Ascending aorta (tissue), 2 donors: ENCODE measurements at regions of chr1 and their contacts with region 1.

Region 1: GRCh38 chr1:173476664-173477285 is 360 bp upstream of the PRDX6 start:
- DNase-seq: peak; percentile 64 to 93
- H3K4me3 ChIP-seq: peak overlapping the region; percentile 88 to 95
- H3K27ac ChIP-seq: peak overlapping the region; percentile 99
- H3K4me1 ChIP-seq: peaks cover 12 to 37% of the 10 kb centered on the region in 2 donors
- H3K27me3 ChIP-seq: no peaks in the 10 kb centered on the region
- CTCF ChIP-seq: peak in 1 of 3 experiments; percentile 5

Region 2: DNA sequence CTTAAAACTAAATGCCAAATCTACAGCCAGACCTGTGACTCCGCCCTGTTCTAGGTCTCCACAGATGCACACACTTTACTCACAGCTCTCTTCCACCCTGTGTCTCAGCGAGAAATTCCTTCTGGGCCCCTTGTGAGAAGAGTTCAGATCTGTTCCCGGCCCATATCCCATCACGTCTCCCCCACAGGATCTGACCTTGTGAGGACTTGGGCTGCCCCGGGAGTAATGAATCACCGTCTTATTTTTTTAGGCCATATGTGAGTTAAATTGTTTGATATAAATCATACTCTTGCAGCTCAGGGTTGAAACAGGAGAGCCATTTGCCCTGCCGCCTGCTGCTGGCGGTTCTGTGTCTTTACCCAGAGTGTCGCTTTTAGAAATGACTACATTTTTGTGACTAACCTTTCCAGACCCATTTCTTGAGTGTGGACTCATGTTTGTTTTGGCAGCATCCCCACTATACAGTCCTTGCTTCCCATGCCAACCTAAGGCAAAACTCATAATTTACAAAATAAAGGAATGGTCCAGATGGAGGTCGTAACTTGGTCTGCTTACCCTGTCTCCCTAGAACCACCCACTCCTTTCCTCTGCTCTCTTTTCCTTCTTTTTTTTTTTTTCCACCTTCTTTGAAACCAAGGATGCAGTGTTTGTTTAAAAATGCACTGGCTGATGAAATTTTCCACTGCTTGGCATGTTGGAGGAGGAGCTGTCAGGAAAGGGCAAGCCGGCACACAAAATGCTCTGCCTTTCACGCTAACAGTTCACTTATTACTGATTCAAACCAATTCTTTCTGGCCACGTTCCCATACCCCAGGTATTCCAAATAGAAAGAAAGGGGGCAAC is 1154.3 kb before region 1 on chr1:
- intact Hi-C with region 1: loop called (anchors 10 kb)
- DNase-seq: peak; percentile 35 to 87
- H3K4me3 ChIP-seq: peak overlapping the region; percentile 5 to 52
- H3K27ac ChIP-seq: peak overlapping the region; percentile 91 to 92
- H3K4me1 ChIP-seq: peaks cover 0 to 23% of the 10 kb centered on the region in 2 donors
- H3K27me3 ChIP-seq: no peaks in the 10 kb centered on the region
- CTCF ChIP-seq: peak in 1 of 3 experiments; percentile 15

Region 3: GRCh38 chr1:173453982-173454381 is 22.8 kb before region 1 on chr1:
- intact Hi-C with region 1: no loop called
- DNase-seq: no peak
- H3K4me3 ChIP-seq: no peak overlapping the region
- H3K27ac ChIP-seq: no peak overlapping the region
- H3K4me1 ChIP-seq: no peaks in the 10 kb centered on the region
- H3K27me3 ChIP-seq: no peaks in the 10 kb centered on the region
- CTCF ChIP-seq: no peak

Region 4: GRCh38 chr1:173489149-173489934 is 12.6 kb after region 1 on chr1:
- intact Hi-C with region 1: no loop called
- DNase-seq: no peak
- H3K4me3 ChIP-seq: no peak overlapping the region
- H3K27ac ChIP-seq: no peak overlapping the region
- H3K4me1 ChIP-seq: no peaks in the 10 kb centered on the region
- H3K27me3 ChIP-seq: no peaks in the 10 kb centered on the region
- CTCF ChIP-seq: no peak

Region 5: GRCh38 chr1:173714759-173715537 is 238.2 kb after region 1 on chr1 and contains the start of gene KLHL20:
- intact Hi-C with region 1: loop called (anchors 5 kb)
- DNase-seq: peak; percentile 21 to 89
- H3K4me3 ChIP-seq: peak within 1 kb of the TSS; percentile 93 to 96
- H3K27ac ChIP-seq: peak within 1 kb of the TSS; percentile 92 to 94
- H3K4me1 ChIP-seq: peaks cover 0 to 14% of the 10 kb centered on the region in 2 donors
- H3K27me3 ChIP-seq: no peaks in the 10 kb centered on the region
- CTCF ChIP-seq: no peak
- total RNA-seq, gene KLHL20: 15.5 TPM

Region 6: GRCh38 chr1:173824331-173825081 is 347.7 kb after region 1 on chr1 and contains the starts of genes CENPL and DARS2:
- intact Hi-C with region 1: loop called (anchors 1 kb)
- DNase-seq: peak; percentile 85 to 98
- H3K4me3 ChIP-seq: peak within 1 kb of the TSS; percentile 65 to 71
- H3K27ac ChIP-seq: peak within 1 kb of the TSS; percentile 90 to 96
- H3K4me1 ChIP-seq: peaks cover 0 to 5% of the 10 kb centered on the region in 2 donors
- H3K27me3 ChIP-seq: no peaks in the 10 kb centered on the region
- CTCF ChIP-seq: no peak
- total RNA-seq, gene CENPL: 0.53 TPM
- total RNA-seq, gene DARS2: 12.1 TPM

Region 7: GRCh38 chr1:174999216-174999925 is 1522.6 kb after region 1 on chr1:
- intact Hi-C with region 1: loop called (anchors 10 kb)
- DNase-seq: peak; percentile 96 to 99
- H3K4me3 ChIP-seq: peak overlapping the region; percentile 77 to 100
- H3K27ac ChIP-seq: peak overlapping the region; percentile 95 to 99
- H3K4me1 ChIP-seq: peaks cover 3 to 25% of the 10 kb centered on the region in 2 donors
- H3K27me3 ChIP-seq: no peaks in the 10 kb centered on the region
- CTCF ChIP-seq: no peak